ENCODE measurements at regions of chr12 and their contacts with region 1.

Region 1: GRCh38 chr12:112419299-112420133 is 769 bp downstream of the PTPN11 start:
- DNase-seq: peak; percentile 74 to 83 (median 81)
- ATAC-seq: peak; percentile 79 to 80
- H3K4me3 ChIP-seq: peak overlapping the region; percentile 96
- H3K27ac ChIP-seq: peak overlapping the region; percentile 84
- H3K4me1 ChIP-seq: peaks cover 5% of the 10 kb centered on the region
- H3K27me3 ChIP-seq: no peaks in the 10 kb centered on the region

Region 2: GRCh38 chr12:112837629-112838197 is 418.2 kb after region 1 on chr12:
- intact Hi-C with region 1: no loop called
- DNase-seq: no peak
- ATAC-seq: no peak
- H3K4me3 ChIP-seq: no peak overlapping the region
- H3K27ac ChIP-seq: no peak overlapping the region
- H3K4me1 ChIP-seq: no peaks in the 10 kb centered on the region
- H3K27me3 ChIP-seq: no peaks in the 10 kb centered on the region

Region 3: DNA sequence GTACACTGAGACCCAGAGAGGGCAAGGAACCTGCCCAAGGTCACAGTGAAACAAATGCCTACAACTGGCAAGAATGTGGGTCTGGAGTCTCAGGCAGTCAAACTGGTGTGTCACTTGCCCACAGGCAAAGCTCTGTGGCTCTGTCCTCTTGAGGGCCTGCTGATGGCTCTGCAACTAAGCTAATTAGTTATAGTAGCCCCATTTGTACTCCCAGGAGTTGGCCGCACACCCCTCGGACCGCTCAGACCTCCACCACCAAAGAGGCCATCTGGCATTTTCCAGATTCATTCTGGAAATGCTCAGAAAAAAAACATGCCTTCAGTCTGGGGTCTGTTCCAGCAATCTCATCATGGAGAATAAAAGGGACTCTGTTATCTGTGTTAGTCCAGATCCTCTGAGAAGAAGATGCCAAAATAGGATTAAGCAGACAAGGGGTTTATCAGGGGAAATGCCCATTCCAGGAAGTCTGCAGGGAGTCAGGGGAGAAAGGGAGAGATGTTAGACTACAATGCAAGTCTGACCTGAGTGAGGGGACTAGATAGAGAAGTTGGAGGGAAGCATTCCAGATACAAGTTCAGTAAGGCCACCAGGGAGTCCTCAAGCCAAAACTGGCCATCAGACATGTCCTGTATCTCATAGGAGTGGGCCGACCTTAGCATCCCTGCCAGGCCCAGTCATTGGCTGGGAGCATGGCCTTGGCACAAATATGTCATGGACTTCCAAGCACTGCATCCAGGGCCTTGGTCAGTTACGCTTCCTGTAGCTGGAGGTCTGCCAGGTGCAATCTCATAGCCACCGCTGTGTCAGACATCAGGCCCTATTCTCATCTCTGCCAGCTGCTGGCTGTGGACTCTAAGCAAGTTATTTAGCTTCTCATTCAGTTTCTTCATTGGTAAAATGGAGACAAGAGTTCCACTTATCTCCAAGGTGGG is 471.8 kb after region 1 on chr12:
- intact Hi-C with region 1: loop called in 1 of 4 experiments (anchors 10 kb)
- DNase-seq: peak; percentile 69 to 81 (median 75)
- ATAC-seq: peak; percentile 63 to 79
- H3K4me3 ChIP-seq: no peak overlapping the region
- H3K27ac ChIP-seq: no peak overlapping the region
- H3K4me1 ChIP-seq: no peaks in the 10 kb centered on the region
- H3K27me3 ChIP-seq: no peaks in the 10 kb centered on the region